H1 (cell line): ENCODE measurements at regions of chr9 and their contacts with region 1.

Region 1: DNA sequence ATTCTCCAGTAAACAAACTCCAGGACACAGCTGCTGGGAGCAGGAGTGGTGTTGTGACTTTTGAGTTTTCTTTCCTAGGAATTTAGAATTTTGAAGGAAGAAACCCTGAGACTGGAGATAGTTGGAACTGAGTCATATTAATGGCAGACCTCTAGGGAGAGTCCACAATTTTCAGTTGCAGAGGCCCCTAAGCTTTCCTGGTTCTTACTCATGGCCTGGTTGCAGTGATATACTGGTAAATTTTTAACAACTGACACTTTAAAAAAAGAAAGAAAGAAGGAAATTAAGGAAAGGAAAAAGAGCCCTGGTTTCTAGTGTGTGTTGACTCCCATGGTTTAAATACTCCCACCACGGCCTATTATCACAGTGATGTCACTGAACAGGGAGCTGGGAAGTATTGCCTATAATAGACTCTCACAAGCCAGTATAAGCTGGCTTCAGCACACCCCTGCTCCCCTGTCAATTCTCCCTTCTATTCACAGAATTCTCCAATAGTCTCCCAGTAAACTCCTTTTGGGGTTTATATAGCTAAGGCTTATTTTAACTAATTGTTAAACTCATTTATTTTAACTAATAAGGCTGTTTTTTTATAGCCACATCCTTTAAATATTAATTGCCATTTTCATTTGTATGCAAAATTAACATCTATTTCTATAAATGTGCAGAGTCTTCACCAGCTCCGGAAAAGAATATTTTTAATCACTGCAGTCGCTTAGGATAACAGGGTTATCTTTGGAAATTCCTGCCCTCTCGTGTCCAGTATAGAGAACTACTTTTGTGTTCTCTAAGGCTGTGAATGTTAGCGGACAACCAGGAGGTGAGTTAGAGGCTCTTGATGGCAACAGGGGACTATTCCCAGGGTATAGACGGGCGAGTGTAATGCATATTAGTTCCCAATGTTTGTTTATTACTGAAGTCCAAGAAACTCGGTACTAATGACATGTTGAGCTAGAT is 59.7 kb downstream of the GGTA1 start:
- DNase-seq: no peak
- H3K4me3 ChIP-seq: no peak overlapping the region
- H3K27ac ChIP-seq: no peak overlapping the region
- H3K4me1 ChIP-seq: no peaks in the 10 kb centered on the region
- H3K27me3 ChIP-seq: no peaks in the 10 kb centered on the region; a peak in 1 of 7 replicates
- CTCF ChIP-seq: peak in 2 of 3 experiments; percentile 6 to 20; a peak in 2 of 4 replicates
- EP300 ChIP-seq: no peak
- POLR2A ChIP-seq: no peak
- RAD21 ChIP-seq: peak in 1 of 2 experiments; percentile 40; a peak in 2 of 4 replicates

Region 2: DNA sequence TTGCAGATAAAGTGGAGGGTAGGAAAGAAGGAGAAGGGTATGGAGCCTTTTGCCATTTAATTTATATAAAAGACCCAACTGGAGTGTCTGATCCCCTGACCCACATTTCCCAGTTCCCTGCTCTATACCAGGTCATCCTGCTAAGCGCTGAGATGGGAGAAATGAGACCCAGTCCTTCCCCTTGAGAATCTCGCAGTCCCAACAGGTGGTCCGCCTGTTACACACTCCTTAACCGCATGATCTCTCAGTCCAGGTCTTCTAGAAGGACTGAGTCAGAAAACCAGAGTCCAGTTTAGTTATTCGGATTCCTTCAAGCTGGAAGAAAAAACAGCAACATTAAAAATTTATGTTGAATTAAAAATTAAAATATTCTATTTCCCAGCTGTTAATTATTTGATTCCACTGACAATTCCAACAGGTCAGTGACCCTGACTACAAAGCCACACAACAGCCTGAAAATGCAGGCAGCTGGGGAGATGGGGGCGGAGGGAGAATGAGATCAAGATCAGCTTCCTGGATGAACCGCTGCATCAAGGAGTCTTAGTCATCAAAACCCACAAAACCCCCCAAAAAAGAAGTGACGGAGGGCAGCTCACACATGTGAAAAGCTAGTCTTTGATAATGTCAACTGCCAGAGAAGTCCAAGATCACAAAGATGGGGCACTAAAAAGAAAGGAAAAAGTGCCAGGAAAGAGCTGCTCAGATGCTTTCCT is 15.7 kb after region 1 on chr9:
- CTCF ChIA-PET with region 1: interaction called, 20 read pairs
- POLR2A ChIA-PET with region 1: no interaction called
- DNase-seq: no peak
- H3K4me3 ChIP-seq: no peak overlapping the region
- H3K27ac ChIP-seq: no peak overlapping the region
- H3K4me1 ChIP-seq: peaks cover 0 to 6% (median 2%) of the 10 kb centered on the region in 4 experiments; a peak in 4 of 7 replicates
- H3K27me3 ChIP-seq: no peaks in the 10 kb centered on the region
- CTCF ChIP-seq: no peak
- EP300 ChIP-seq: no peak
- POLR2A ChIP-seq: no peak
- RAD21 ChIP-seq: no peak

Region 3: GRCh38 chr9:121463026-121463807 is 23.2 kb after region 1 on chr9:
- CTCF ChIA-PET with region 1: interaction called, 20 read pairs
- POLR2A ChIA-PET with region 1: no interaction called
- DNase-seq: peak; percentile 15 to 87
- H3K4me3 ChIP-seq: no peak overlapping the region
- H3K27ac ChIP-seq: no peak overlapping the region
- H3K4me1 ChIP-seq: peaks cover 0 to 4% (median 1%) of the 10 kb centered on the region in 4 experiments; a peak in 2 of 7 replicates
- H3K27me3 ChIP-seq: no peaks in the 10 kb centered on the region
- CTCF ChIP-seq: peak; percentile 69 to 83 (median 74)
- EP300 ChIP-seq: no peak
- POLR2A ChIP-seq: no peak
- RAD21 ChIP-seq: peak; percentile 45 to 68; a peak in 3 of 4 replicates

Region 4: GRCh38 chr9:121551985-121552753 is 112.2 kb after region 1 on chr9:
- CTCF ChIA-PET with region 1: no interaction called
- POLR2A ChIA-PET with region 1: no interaction called
- DNase-seq: no peak
- H3K4me3 ChIP-seq: no peak overlapping the region
- H3K27ac ChIP-seq: no peak overlapping the region
- H3K4me1 ChIP-seq: no peaks in the 10 kb centered on the region; a peak in 2 of 7 replicates
- H3K27me3 ChIP-seq: peaks cover 0 to 8% (median 2%) of the 10 kb centered on the region in 4 experiments; a peak in 4 of 7 replicates
- CTCF ChIP-seq: no peak
- EP300 ChIP-seq: no peak
- POLR2A ChIP-seq: no peak
- RAD21 ChIP-seq: no peak